Panc1 (cell line): ENCODE measurements at regions of chr4 and their contacts with region 1.

Region 1: DNA sequence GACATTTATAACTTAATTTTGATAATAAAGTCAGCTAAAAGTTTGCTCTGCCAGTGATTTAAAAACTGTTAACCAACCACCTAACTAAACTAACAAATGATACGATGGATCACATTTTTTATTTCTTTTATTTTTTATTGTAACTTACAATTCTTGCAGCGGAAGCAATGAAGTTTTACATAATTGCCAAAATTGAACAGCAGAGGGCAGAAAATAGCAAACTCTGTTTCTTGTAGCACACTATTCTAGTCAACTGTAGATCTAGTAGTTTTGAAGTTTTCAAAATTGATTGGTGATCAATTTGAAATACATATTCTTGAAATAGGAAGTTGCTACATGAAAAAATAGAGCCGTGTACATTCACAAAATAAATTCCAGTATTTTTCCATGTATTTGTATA is 2.8 kb upstream of the GRIA2 start:
- DNase-seq: no peak
- ATAC-seq: no peak
- H3K4me3 ChIP-seq: no peak overlapping the region
- H3K27ac ChIP-seq: no peak overlapping the region
- H3K4me1 ChIP-seq: no peaks in the 10 kb centered on the region
- H3K27me3 ChIP-seq: no peaks in the 10 kb centered on the region
- CTCF ChIP-seq: peak; percentile 45; the same call in 1 of the 2 replicates

Region 2: GRCh38 chr4:155946486-155946885 is 1271.2 kb before region 1 on chr4:
- CTCF ChIA-PET with region 1: no interaction called
- POLR2A ChIA-PET with region 1: no interaction called
- in situ Hi-C with region 1: no loop called
- intact Hi-C with region 1: no loop called
- DNase-seq: no peak
- ATAC-seq: no peak
- H3K4me3 ChIP-seq: no peak overlapping the region
- H3K27ac ChIP-seq: no peak overlapping the region
- H3K4me1 ChIP-seq: no peaks in the 10 kb centered on the region
- H3K27me3 ChIP-seq: no peaks in the 10 kb centered on the region
- CTCF ChIP-seq: no peak

Region 3: GRCh38 chr4:156931267-156931666 is 286.4 kb before region 1 on chr4:
- CTCF ChIA-PET with region 1: no interaction called
- POLR2A ChIA-PET with region 1: no interaction called
- in situ Hi-C with region 1: no loop called
- intact Hi-C with region 1: no loop called
- DNase-seq: no peak
- ATAC-seq: peak; percentile 75
- H3K4me3 ChIP-seq: no peak overlapping the region
- H3K27ac ChIP-seq: peak overlapping the region; percentile 79
- H3K4me1 ChIP-seq: peaks cover 3% of the 10 kb centered on the region
- H3K27me3 ChIP-seq: no peaks in the 10 kb centered on the region
- CTCF ChIP-seq: no peak

Region 4: GRCh38 chr4:157151711-157152110 is 66.0 kb before region 1 on chr4:
- CTCF ChIA-PET with region 1: no interaction called
- POLR2A ChIA-PET with region 1: no interaction called
- in situ Hi-C with region 1: no loop called
- intact Hi-C with region 1: no loop called
- DNase-seq: no peak
- ATAC-seq: no peak
- H3K4me3 ChIP-seq: no peak overlapping the region
- H3K27ac ChIP-seq: no peak overlapping the region
- H3K4me1 ChIP-seq: no peaks in the 10 kb centered on the region
- H3K27me3 ChIP-seq: no peaks in the 10 kb centered on the region
- CTCF ChIP-seq: no peak

Region 5: DNA sequence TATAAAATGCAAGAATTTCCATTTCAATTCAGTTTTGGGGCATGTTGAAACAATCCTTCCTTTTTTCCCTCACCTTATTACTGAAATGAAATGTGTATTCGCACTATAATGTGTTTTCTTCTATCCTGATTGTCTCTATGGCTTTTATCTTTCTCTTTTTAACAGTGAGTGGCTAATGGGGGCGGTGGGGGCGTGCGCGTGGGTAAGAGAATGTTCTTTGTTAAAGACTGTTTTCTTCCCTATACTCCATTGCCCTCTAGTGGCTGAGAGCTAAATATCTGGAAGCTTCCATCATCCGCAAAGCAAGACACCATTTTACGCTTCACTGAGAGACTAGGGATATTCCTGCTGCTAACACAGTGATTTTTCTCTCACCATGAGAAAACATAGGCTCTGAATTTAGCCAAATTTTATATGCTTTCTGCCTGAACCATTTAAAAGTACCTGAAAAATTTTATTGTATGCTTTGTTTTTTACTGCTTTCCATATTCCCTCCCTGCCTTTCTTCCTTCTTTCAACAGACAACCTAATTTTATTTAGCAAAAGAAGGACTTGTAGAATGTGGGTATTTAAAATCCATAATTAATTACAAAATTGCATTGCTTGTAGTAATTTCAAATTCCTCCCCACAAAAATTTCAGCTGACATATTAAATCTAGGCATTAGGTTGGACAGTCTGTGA is 761.1 kb after region 1 on chr4:
- CTCF ChIA-PET with region 1: no interaction called
- POLR2A ChIA-PET with region 1: no interaction called
- in situ Hi-C with region 1: no loop called
- intact Hi-C with region 1: loop called (anchors 2 kb)
- DNase-seq: peak; percentile 42
- ATAC-seq: peak; percentile 80
- H3K4me3 ChIP-seq: no peak overlapping the region
- H3K27ac ChIP-seq: no peak overlapping the region
- H3K4me1 ChIP-seq: no peaks in the 10 kb centered on the region
- H3K27me3 ChIP-seq: no peaks in the 10 kb centered on the region
- CTCF ChIP-seq: peak; percentile 80